Panc1 (cell line): ENCODE measurements at regions of chr2 and their contacts with region 1.

Region 1: DNA sequence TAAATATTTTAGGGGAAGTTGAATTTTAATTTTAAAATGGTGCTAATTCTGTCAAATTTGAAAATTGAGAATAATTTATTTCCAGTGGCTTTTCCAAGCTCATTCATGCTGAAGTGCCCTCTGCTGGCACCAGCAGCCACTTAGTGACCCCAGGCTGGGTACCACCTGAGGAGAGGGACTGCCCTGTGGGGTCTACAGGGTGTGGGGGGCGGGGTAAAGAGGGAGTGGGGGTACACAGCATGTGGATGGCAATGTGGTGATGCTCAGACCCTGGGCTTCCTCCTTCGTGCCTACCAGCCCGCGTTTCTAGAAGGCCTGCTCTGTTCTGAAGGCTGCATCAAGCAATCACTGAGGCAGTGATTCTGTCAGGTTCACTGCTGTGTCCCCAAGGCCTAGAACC is 45.1 kb upstream of the SCLY start:
- DNase-seq: no peak
- ATAC-seq: no peak
- H3K4me3 ChIP-seq: no peak overlapping the region
- H3K27ac ChIP-seq: no peak overlapping the region
- H3K4me1 ChIP-seq: no peaks in the 10 kb centered on the region
- H3K27me3 ChIP-seq: no peaks in the 10 kb centered on the region
- CTCF ChIP-seq: no peak; the same call in 1 of the 2 replicates

Region 2: DNA sequence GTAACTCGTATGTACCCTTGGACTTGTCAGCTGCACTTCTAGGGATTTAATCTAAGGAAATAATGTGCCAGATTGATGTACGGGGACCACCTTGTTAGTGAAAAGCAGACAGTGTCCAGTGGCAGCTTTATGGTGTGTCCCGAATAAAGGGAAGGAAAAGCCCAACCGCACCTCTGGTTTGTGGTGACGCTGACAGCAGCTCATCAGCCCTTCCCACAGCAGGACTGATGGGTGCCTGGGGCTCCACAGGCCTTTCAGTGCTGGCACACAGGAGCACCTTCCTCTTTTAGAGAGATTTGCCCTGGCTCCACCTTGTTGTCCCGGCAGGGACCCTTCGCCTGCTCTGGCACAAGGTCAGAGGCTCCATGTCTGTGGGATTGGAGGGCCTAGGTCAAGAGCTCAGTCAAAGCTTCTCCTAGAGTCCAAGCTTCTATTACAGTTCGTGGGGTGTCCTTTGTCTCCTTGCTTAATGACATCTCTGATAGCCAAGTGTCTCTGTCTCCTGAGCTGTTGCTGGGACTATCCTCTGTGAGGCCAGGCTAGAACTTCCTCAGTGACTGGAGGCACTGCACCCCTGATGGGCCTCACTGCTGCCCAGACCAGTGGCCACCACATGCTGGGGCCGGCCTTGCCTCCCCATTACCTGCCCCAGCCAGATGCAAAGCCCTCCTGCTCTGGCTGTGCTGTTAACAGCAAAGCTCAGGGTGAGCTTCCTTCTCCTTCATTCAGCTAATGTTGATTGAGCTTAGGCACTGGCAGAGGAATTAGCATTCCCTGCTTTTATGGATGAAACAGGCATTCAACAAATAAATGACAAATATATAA is 12.1 kb after region 1 on chr2:
- CTCF ChIA-PET with region 1: no interaction called
- POLR2A ChIA-PET with region 1: no interaction called
- in situ Hi-C with region 1: no loop called
- intact Hi-C with region 1: no loop called
- DNase-seq: no peak
- ATAC-seq: no peak
- H3K4me3 ChIP-seq: no peak overlapping the region
- H3K27ac ChIP-seq: no peak overlapping the region
- H3K4me1 ChIP-seq: no peaks in the 10 kb centered on the region
- H3K27me3 ChIP-seq: no peaks in the 10 kb centered on the region
- CTCF ChIP-seq: no peak

Region 3: GRCh38 chr2:238053191-238053776 is 37.6 kb after region 1 on chr2:
- CTCF ChIA-PET with region 1: interaction called, 11 read pairs
- POLR2A ChIA-PET with region 1: no interaction called
- in situ Hi-C with region 1: no loop called
- intact Hi-C with region 1: no loop called
- DNase-seq: no peak
- ATAC-seq: no peak
- H3K4me3 ChIP-seq: no peak overlapping the region
- H3K27ac ChIP-seq: no peak overlapping the region
- H3K4me1 ChIP-seq: no peaks in the 10 kb centered on the region
- H3K27me3 ChIP-seq: no peaks in the 10 kb centered on the region
- CTCF ChIP-seq: no peak